ENCODE measurements at regions of chr6 and their contacts with region 1.

Region 1: GRCh38 chr6:79646006-79646405 is 14.9 kb downstream of the SH3BGRL2 start:
- DNase-seq: peak in 9 of 14 experiments; percentile 5 to 60 (median 23)
- ATAC-seq: peak; percentile 55
- H3K4me3 ChIP-seq: no peak overlapping the region
- H3K4me3 Mint-ChIP-seq: no peak overlapping the region
- H3K27ac ChIP-seq: no peak overlapping the region
- H3K27ac Mint-ChIP-seq: no peak overlapping the region
- H3K4me1 ChIP-seq: no peaks in the 10 kb centered on the region
- H3K4me1 Mint-ChIP-seq: peaks cover 16% of the 10 kb centered on the region
- H3K27me3 ChIP-seq: no peaks in the 10 kb centered on the region
- H3K27me3 Mint-ChIP-seq: no peaks in the 10 kb centered on the region
- CTCF ChIP-seq: peak; percentile 52

Region 2: DNA sequence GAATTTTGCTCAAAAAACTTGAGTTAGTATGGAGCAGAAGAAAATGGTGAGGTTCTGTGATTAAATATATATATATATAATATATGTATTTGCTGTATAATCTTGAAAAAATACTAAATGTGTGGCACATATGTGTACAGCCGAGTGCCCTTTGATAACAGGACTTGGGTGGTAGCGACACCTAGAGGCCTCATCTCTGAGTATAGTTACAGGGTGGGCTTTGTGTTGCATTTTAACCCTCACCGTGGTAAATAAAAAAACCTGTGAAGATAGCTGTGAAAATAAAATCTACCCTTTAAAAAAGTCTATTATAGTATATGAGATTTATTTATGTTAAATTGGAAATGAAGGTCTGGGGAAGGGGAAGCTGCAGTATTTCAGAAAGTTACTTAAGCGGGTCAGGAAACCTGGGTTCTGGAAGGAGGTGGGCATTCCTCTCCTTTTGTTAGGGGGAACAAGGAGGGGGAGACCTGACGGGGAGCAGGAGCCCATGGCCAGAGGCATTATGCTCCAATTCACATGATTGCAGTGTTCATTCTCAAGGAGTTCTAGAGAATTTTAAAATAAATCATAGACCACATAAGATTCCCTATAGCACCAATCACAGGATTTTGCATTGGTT is 67.8 kb after region 1 on chr6:
- CTCF ChIA-PET with region 1: no interaction called
- POLR2A ChIA-PET with region 1: no interaction called
- intact Hi-C with region 1: loop called (anchors 1 to 2 kb)
- DNase-seq: peak; percentile 7 to 70 (median 32)
- ATAC-seq: peak; percentile 58
- H3K4me3 ChIP-seq: no peak overlapping the region
- H3K4me3 Mint-ChIP-seq: no peak overlapping the region
- H3K27ac ChIP-seq: no peak overlapping the region
- H3K27ac Mint-ChIP-seq: no peak overlapping the region
- H3K4me1 ChIP-seq: no peaks in the 10 kb centered on the region
- H3K4me1 Mint-ChIP-seq: no peaks in the 10 kb centered on the region
- H3K27me3 ChIP-seq: no peaks in the 10 kb centered on the region
- H3K27me3 Mint-ChIP-seq: peaks cover 4% of the 10 kb centered on the region
- CTCF ChIP-seq: peak; percentile 79

Region 3: GRCh38 chr6:79813854-79814709 is 168.1 kb after region 1 on chr6:
- CTCF ChIA-PET with region 1: no interaction called
- POLR2A ChIA-PET with region 1: no interaction called
- intact Hi-C with region 1: loop called in 1 of 2 experiments (anchors 10 kb)
- DNase-seq: peak; percentile 24 to 69 (median 46)
- ATAC-seq: peak; percentile 46
- H3K4me3 ChIP-seq: no peak overlapping the region
- H3K4me3 Mint-ChIP-seq: no peak overlapping the region
- H3K27ac ChIP-seq: no peak overlapping the region
- H3K27ac Mint-ChIP-seq: no peak overlapping the region
- H3K4me1 ChIP-seq: no peaks in the 10 kb centered on the region
- H3K4me1 Mint-ChIP-seq: no peaks in the 10 kb centered on the region
- H3K27me3 ChIP-seq: no peaks in the 10 kb centered on the region
- H3K27me3 Mint-ChIP-seq: peaks cover 15% of the 10 kb centered on the region
- CTCF ChIP-seq: peak; percentile 87

Measured in CD4-positive, alpha-beta T cell (primary cell).